ENCODE measurements at regions of chr17 and their contacts with region 1.

Region 1: DNA sequence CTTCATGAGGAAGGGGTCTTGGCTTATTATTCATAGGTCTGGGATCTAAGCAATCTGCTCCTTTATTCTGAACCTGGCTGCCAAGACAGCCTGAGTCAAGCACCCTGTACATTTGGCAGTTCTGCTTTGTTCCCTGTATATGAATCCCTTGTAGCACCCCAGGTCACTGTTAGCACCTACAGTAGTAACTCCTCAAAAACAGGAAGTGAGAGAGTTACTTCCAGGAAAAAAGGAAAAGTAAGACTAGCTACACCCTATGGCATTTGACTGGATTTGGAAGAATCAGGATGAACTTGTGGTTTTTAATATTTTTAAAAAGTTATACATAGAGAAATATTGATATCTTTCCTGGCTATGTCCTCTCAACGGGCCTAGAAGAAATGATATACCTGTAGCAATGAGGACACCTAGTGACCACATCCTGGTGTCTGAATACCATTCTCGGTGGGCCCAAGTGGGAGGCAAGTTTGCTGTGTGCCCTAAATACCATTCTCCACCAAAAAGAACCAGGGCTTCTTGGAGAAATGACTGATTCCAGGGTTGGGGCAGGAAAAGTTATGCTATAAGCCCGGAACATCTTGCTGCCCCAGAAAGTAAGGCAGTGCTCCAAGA is 9.9 kb downstream of the ANKRD40 start:
- DNase-seq: no peak
- ATAC-seq: no peak
- H3K4me3 ChIP-seq: no peak overlapping the region
- H3K27ac ChIP-seq: peak overlapping the region; percentile 28 to 93 (median 72)
- H3K4me1 ChIP-seq: peaks cover 50% of the 10 kb centered on the region
- H3K27me3 ChIP-seq: no peaks in the 10 kb centered on the region
- CTCF ChIP-seq: peak in 4 of 7 experiments; percentile 30 to 41 (median 37)
- POLR2A ChIP-seq: no peak

Region 2: GRCh38 chr17:50626037-50626574 is 71.7 kb before region 1 on chr17:
- intact Hi-C with region 1: loop called (anchors 5 kb)
- DNase-seq: peak; percentile 80 to 86 (median 83)
- ATAC-seq: peak; percentile 66
- H3K4me3 ChIP-seq: no peak overlapping the region
- H3K27ac ChIP-seq: no peak overlapping the region
- H3K4me1 ChIP-seq: peaks cover 26% of the 10 kb centered on the region
- H3K27me3 ChIP-seq: no peaks in the 10 kb centered on the region
- CTCF ChIP-seq: peak; percentile 60 to 82 (median 74)
- POLR2A ChIP-seq: no peak

Region 3: DNA sequence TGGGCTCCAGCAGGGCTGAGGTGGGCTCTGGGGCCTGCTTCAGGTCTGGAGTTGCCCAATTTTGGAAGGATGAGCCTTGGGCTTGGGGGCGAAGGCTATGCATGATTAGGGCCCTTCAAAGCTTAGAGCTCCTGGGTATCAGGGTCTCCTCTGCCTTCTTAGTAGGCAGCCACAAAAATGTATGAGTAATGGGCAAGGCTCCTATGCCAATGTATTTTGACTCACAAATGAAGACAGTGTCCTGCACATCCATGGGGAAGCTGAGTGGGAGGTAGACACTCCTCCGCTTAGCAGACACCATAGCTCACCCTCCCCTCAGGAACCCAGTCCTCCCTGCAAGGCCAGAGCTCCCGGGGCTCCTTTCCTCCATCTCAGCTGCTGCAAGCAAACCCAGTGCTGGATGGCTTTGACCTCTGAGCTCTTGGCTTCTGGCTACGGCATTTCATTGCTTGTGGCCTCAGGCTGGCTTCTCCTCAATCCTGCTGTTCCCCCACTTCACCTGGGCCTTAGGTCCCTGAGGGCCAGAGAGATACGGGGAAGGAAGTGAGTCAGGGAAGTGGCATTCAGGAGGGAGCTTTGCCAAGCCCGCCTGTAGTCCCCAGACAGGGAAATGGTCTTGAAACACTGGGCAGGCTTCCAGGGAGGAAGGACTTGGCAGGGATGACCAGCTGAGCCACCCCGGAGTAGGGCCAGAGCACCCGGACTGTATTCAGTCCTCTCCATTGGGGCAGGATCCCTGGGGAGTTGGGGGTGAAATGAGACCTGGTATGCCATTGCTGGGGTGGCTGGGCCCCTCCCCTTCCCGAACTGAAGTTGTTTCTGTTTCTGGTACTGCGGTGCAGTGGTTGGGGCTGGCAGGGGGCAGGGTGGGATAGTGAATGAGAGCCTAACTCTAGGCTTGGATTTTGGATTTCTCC is 58.7 kb before region 1 on chr17:
- intact Hi-C with region 1: no loop called
- DNase-seq: peak; percentile 98 to 100 (median 99)
- ATAC-seq: peak; percentile 85
- H3K4me3 ChIP-seq: no peak overlapping the region
- H3K27ac ChIP-seq: peak overlapping the region; percentile 82 to 89 (median 86)
- H3K4me1 ChIP-seq: peaks cover 94% of the 10 kb centered on the region
- H3K27me3 ChIP-seq: no peaks in the 10 kb centered on the region
- CTCF ChIP-seq: no peak
- POLR2A ChIP-seq: peak in 1 of 3 donors; percentile 10